ENCODE measurements at regions of chr11 and their contacts with region 1.

Region 1: DNA sequence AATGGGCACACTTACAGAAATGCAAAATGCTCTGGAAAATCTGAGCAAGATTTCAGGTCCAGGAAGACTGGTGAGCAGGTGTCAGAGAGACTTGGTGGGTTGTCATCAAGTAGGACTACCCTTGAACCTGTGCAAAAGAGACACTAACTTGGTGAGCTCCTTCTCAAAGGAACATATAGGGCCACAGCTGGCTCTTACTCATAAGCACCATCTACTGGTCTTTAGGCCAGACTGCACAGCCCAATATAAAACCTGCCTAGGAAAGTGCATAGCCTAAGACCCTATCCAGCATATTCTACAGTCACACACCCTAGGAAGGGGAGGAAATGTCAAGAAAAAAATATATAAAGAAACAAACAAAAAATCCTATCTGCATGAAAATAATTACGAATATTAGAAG is 18.2 kb upstream of the OR10W1 start:
- DNase-seq: no peak
- H3K4me3 ChIP-seq: no peak overlapping the region
- CTCF ChIP-seq: peak; percentile 21

Region 2: DNA sequence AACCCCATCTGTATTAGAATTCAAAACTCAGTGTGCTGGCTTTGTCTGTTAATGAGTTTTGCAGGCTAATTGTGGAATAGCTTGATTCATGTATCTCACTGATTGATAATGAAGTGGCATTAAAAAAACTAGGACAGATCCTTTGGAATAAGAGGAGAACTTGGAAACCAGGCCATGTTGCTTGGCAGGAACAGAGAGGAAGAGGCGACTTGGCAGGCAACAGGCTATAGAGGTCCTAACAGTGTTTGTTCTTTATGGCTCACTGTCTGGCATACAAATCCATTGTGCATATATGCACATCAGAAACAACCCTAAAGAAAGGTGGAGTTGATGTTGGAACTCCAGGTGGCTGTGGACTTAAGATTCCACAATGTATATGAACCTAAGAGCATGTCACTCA is 143.5 kb before region 1 on chr11:
- CTCF ChIA-PET with region 1: no interaction called
- POLR2A ChIA-PET with region 1: no interaction called
- DNase-seq: no peak
- H3K4me3 ChIP-seq: no peak overlapping the region
- CTCF ChIP-seq: no peak

Region 3: GRCh38 chr11:58301576-58301975 is 15.3 kb after region 1 on chr11:
- CTCF ChIA-PET with region 1: interaction called, 13 read pairs
- POLR2A ChIA-PET with region 1: no interaction called
- DNase-seq: peak; percentile 14
- H3K4me3 ChIP-seq: no peak overlapping the region
- CTCF ChIP-seq: no peak

Region 4: GRCh38 chr11:58316142-58316541 is 29.9 kb after region 1 on chr11:
- CTCF ChIA-PET with region 1: no interaction called
- POLR2A ChIA-PET with region 1: no interaction called
- DNase-seq: no peak
- H3K4me3 ChIP-seq: no peak overlapping the region
- CTCF ChIP-seq: no peak